Mucosa of descending colon (tissue), 3 donors: ENCODE measurements at regions of chr21 and their contacts with region 1.

Region 1: GRCh38 chr21:33712022-33712803 is 69.9 kb downstream of the ITSN1 start:
- DNase-seq: no peak
- ATAC-seq: no peak
- H3K4me3 ChIP-seq: no peak overlapping the region
- H3K4me1 ChIP-seq: no peaks in the 10 kb centered on the region
- CTCF ChIP-seq: no peak

Region 2: GRCh38 chr21:33655591-33656221 is 56.5 kb before region 1 on chr21:
- intact Hi-C with region 1: loop called in 1 of 2 experiments (anchors 10 kb)
- DNase-seq: peak in 1 of 3 donors; percentile 37
- ATAC-seq: peak; percentile 83
- H3K4me3 ChIP-seq: no peak overlapping the region
- H3K4me1 ChIP-seq: peaks cover 12% of the 10 kb centered on the region
- CTCF ChIP-seq: no peak

Region 3: GRCh38 chr21:34086887-34087306 is 374.7 kb after region 1 on chr21:
- intact Hi-C with region 1: no loop called
- DNase-seq: no peak
- ATAC-seq: peak; percentile 10
- H3K4me3 ChIP-seq: no peak overlapping the region
- H3K4me1 ChIP-seq: peaks cover 13% of the 10 kb centered on the region
- CTCF ChIP-seq: no peak